Right ventricle myocardium superior (tissue), 1 donor: ENCODE measurements at regions of chr17 and their contacts with region 1.

Region 1: DNA sequence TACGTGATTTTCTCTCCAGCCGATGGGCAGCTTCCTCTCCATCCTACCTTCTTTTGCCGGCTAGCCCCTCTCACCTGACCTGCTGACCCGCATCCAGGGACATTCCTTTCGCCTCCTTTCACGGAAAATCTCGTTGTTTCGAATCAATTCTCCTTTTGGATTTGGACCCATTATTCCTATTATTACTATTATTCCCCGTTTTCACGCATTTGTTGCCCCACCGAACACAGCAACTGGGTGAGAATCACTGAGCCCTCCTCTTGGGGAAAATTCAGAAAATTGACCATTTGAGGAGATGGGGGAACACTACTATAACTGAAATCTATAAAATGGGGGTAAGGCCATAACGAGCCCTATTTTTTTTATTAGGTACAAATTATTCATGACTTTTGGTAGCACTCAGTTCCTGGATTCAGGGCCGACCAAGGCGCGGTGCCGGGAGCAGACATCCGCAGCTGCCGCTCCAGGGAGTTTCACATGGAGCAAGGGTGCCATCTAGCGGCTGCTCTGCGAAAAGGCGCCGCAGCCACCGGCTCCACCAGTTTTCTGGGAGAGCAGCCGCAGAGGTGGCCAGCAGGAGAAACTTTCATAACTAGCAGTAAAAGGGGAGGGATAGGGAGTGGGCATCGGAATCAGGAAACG is 3.3 kb upstream of the HOXB8 start:
- DNase-seq: peak; percentile 91
- ATAC-seq: peak; percentile 95

Region 2: GRCh38 chr17:47850692-47851573 is 767.4 kb before region 1 on chr17 and contains the start of gene SP6:
- intact Hi-C with region 1: no loop called
- DNase-seq: peak; percentile 65
- ATAC-seq: peak; percentile 92
- total RNA-seq, gene SP6: 0.08 TPM

Region 3: GRCh38 chr17:48335858-48336500 is 282.4 kb before region 1 on chr17:
- intact Hi-C with region 1: loop called (anchors 5 kb)
- DNase-seq: no peak
- ATAC-seq: no peak

Region 4: GRCh38 chr17:48928876-48929811 is 310.8 kb after region 1 on chr17:
- intact Hi-C with region 1: no loop called
- DNase-seq: no peak
- ATAC-seq: no peak